ENCODE measurements at regions of chr2 and their contacts with region 1.

Region 1: DNA sequence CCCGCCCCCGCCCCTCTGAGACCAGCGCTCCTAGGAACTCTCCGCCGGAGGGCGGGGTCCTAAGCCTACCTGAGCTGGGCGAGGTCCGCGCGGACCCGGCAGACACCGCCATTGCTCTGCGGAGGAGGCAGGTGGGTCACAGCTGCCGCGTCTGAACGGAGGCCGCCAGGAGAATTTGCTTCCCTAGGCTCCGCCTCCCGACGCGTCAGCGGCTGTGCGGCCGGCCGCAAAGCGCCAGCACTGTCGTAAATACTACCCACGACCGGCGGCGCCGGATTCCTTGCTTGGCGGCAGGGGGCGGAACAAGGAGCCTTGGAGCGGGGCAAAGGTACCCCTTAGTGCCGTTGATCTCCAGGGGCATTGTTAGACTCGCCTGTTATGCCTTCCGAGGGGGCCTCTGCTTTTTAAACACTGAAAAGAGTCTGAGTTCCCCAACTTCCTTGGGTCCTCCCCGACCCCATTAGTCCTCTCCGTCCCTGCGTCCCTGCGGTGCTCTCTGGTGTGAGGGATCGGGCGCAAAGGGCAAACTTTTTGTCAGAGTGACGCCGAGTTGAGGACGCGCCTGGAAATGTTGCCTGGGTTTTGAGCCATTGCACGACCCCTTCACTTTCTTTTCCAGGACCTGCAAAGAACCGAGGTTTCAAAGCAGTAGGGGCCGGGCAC is at the start of gene GGCX:
- DNase-seq: peak; percentile 97 to 98
- ATAC-seq: peak; percentile 94 to 97 (median 96)
- H3K4me3 ChIP-seq: peak within 1 kb of the TSS; percentile 81
- H3K27ac ChIP-seq: peak within 1 kb of the TSS; percentile 88
- H3K4me1 ChIP-seq: peaks cover 12% of the 10 kb centered on the region
- H3K27me3 ChIP-seq: no peaks in the 10 kb centered on the region
- CTCF ChIP-seq: peak; percentile 11
- total RNA-seq, gene GGCX: 20.1 to 25.3 (median 22.1) TPM

Region 2: DNA sequence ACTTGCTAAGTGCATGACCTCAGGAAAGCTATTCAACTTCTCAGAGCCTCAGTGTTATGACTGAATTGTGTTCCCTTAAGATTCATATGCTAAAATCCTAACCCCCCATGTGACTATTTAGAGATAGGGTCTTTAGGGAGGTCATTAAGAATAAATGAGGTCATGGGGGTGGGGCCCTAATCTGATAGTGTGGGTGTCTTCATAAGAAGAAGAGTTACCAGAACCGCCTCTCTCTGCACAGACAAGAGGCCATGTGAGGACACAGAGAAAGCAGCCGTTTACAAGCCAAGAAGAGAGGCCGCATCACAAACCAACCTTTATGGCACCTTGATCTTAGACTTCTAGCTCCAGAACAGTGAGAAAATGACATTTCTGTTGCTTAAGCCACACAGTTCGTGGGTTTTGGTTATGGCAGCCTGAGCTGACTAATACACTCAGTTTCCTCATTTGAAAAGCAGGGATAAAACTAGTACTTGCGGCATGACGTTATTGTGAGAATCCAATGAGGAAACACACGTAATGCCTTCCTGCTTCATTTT is 133.0 kb before region 1 on chr2:
- intact Hi-C with region 1: loop called in 1 of 2 experiments (anchors 2 kb)
- DNase-seq: no peak
- ATAC-seq: no peak
- H3K4me3 ChIP-seq: no peak overlapping the region
- H3K27ac ChIP-seq: no peak overlapping the region
- H3K4me1 ChIP-seq: peaks cover 11% of the 10 kb centered on the region
- H3K27me3 ChIP-seq: no peaks in the 10 kb centered on the region
- CTCF ChIP-seq: no peak

Region 3: GRCh38 chr2:85595301-85596025 is 34.0 kb after region 1 on chr2 and contains the start of gene RNF181:
- intact Hi-C with region 1: loop called (anchors 5 kb)
- DNase-seq: peak; percentile 92 to 95
- ATAC-seq: peak; percentile 95 to 98 (median 96)
- H3K4me3 ChIP-seq: peak within 1 kb of the TSS; percentile 82
- H3K27ac ChIP-seq: peak within 1 kb of the TSS; percentile 93
- H3K4me1 ChIP-seq: peaks cover 47% of the 10 kb centered on the region
- H3K27me3 ChIP-seq: no peaks in the 10 kb centered on the region
- CTCF ChIP-seq: no peak
- total RNA-seq, gene RNF181: 84.7 to 107 (median 90.0) TPM